Aorta (tissue), 5 donors: ENCODE measurements at regions of chr9 and their contacts with region 1.

Region 1: DNA sequence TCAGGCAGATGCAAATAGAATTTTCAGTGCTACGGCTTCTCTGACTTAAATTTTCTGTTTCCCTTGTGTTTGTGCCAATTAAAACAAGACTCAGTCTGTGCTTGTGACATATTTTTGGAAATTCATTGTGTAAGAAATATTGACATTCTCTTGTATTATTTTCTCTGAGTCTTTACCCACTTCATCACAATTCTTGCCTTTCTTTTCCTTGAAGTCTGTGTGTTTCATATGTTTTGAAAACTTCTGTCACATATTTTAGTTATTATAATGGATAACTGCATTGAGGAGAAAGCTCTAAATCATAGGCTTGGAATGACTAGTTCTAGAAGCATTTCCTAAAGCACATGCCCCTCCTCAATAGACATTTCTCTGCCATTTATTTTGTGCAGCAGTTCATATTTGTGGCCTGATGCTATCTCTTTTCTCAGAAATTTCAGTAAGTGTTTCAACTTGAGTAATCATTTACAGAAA is 206.6 kb downstream of the PALM2AKAP2 start:
- DNase-seq: no peak
- ATAC-seq: peak; percentile 70
- H3K4me3 ChIP-seq: no peak overlapping the region
- H3K27ac ChIP-seq: no peak overlapping the region
- H3K4me1 ChIP-seq: peaks cover under 1 to 3% of the 10 kb centered on the region in 2 donors
- H3K27me3 ChIP-seq: no peaks in the 10 kb centered on the region

Region 2: DNA sequence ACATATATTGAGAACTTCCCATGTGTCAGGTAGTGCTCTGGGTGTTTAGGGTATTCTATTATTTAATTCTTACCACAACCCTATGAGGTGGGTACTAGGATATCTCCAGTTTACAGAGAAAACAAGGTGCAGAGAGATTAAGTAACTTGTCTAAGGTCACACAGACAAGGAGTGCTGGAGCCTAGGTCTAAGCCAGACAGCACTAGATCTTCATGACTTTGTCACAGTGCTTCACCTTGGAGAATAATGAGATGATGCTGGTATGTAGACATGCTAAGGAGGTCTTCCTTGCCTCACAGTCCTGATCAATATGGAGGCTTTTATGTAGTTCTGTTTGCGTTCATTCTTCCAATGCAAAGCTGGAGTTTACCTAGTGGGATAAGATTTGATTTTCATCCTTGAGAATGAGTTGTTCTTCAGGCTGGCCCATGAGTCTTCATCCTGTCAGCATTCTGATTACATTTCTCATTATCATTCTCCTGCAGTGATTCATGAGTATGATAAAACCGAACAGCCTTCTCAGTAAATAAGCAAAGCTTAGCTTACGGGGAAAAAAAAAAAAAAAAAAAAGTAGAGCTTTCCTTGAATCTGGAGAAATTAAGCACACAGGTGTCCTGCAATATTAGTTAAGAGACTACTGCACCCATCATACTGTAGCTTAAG is 45.1 kb after region 1 on chr9:
- intact Hi-C with region 1: loop called in 1 of 2 experiments (anchors 5 kb)
- DNase-seq: no peak
- ATAC-seq: no peak
- H3K4me3 ChIP-seq: no peak overlapping the region
- H3K27ac ChIP-seq: no peak overlapping the region
- H3K4me1 ChIP-seq: peaks cover 4 to 16% of the 10 kb centered on the region in 2 donors
- H3K27me3 ChIP-seq: no peaks in the 10 kb centered on the region

Region 3: DNA sequence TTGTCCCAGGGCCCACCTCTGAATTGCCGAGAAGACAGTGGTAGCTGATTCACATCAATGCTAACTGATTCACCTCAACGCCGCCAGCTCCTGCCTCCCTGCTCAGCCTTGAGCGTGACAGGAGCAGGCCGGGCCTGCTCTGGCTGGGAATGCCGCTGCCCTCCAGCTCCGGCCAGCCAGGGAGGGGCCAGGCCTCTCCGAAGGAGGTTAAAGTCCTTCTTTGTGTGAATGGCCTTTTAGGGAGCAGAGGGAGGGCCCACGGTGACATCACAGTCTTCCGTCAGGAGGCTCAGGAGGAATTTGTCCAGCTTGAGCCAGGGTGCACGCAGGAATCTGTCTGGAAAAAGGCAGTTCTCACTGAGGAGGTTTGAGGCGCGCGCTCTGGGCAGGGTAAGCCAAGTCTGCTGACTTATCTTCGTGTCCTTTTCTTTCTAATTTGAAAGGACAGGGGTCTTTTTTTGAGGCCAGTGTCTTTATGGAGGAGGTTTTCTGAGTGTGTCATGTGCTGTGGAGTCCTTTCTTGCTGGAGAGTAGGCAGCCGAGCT is 138.7 kb after region 1 on chr9:
- intact Hi-C with region 1: loop called in 1 of 2 experiments (anchors 10 kb)
- DNase-seq: peak; percentile 94 to 95
- ATAC-seq: peak; percentile 90
- H3K4me3 ChIP-seq: peak overlapping the region; percentile 8 to 68
- H3K27ac ChIP-seq: peak overlapping the region; percentile 89 to 96
- H3K4me1 ChIP-seq: peaks cover 3 to 4% of the 10 kb centered on the region in 2 donors
- H3K27me3 ChIP-seq: no peaks in the 10 kb centered on the region